Mammary epithelial cell (primary cell): ENCODE measurements at regions of chr12 and their contacts with region 1.

Region 1: GRCh38 chr12:99752358-99753139 is 105.0 kb downstream of the GARIN6 start:
- DNase-seq: peak; percentile 61
- H3K4me3 ChIP-seq: no peak overlapping the region
- H3K27ac ChIP-seq: no peak overlapping the region
- H3K4me1 ChIP-seq: peaks cover 8% of the 10 kb centered on the region
- H3K27me3 ChIP-seq: no peaks in the 10 kb centered on the region
- CTCF ChIP-seq: no peak

Region 2: GRCh38 chr12:101021909-101022388 is 1269.4 kb after region 1 on chr12:
- CTCF ChIA-PET with region 1: interaction called, 18 read pairs
- dilution Hi-C with region 1: no loop called
- in situ Hi-C with region 1: no loop called
- intact Hi-C with region 1: no loop called
- DNase-seq: peak; percentile 79
- H3K4me3 ChIP-seq: no peak overlapping the region
- H3K27ac ChIP-seq: peak overlapping the region; percentile 97
- H3K4me1 ChIP-seq: peaks cover 49% of the 10 kb centered on the region
- H3K27me3 ChIP-seq: no peaks in the 10 kb centered on the region
- CTCF ChIP-seq: no peak